Activated CD8-positive, alpha-beta T cell treated with anti-CD3 and anti-CD28 coated beads for 36 hours (primary cell): ENCODE measurements at regions of chrX and their contacts with region 1.

Region 1: DNA sequence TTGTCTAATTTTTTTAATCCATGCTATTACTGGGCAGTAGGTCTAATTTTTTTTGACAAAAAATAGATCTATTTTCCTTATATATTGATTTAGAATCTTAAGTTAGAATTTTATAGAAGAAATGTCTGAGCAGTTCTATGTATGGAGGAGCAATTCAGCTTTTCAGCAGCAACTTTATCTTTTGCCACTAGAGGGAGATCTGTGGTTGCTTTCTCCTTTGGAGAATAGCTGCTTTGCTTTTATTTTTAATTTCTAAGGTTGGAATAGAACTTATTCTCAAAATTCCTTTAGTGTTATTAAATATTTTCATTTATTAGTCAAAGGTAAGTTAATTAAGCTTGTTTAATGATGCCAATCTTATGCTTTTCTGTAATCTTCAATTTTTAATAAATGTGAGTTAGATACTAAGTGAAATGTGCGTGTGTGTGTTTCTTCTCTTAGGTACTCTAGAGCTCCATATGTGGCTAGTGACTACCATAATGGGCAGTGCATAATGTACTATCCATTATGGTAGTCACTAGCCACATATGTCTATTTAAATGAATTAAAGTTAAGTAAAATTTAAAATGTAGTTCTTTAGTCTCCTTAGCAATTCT is 29.3 kb downstream of the FAM199X start:
- DNase-seq: peak; percentile 2
- ATAC-seq: no peak
- H3K4me3 Mint-ChIP-seq: no peak overlapping the region
- H3K27ac Mint-ChIP-seq: no peak overlapping the region
- H3K4me1 Mint-ChIP-seq: peaks cover 10% of the 10 kb centered on the region
- H3K27me3 Mint-ChIP-seq: no peaks in the 10 kb centered on the region
- CTCF ChIP-seq: peak; percentile 37

Region 2: DNA sequence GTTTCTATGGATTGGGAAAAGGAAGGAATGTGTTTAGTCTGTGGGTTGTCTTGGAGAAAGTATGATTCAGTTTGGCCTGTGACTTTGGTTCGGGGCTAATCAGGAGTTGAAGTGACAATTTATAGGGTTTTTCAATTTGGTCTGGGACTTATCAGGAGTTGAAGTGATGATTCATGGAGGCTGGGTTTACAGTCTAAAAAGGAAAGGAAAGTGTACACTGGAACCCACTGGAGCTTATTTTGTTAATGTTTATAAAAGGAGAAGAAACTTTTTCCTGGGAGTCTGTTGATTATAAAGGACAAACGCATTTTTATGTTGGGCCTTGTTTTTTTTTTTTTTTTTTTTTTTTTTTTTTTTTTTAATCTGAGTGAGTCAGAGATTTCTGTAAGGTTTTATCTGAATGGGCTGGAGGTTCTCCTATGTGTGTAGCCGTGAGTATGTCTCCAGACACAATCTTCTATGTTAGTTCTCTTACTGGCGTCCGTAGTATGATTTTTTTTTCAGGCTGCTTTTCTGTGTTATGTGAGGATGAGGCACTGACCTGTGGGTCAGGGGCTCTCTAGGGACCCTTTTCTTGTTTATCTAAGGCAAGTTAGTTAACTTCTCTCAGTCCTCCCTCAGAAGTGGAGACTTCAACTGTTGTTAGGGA is 330.6 kb before region 1 on chrX:
- CTCF ChIA-PET with region 1: no interaction called
- POLR2A ChIA-PET with region 1: no interaction called
- intact Hi-C with region 1: no loop called
- DNase-seq: no peak
- ATAC-seq: no peak
- H3K4me3 Mint-ChIP-seq: no peak overlapping the region
- H3K27ac Mint-ChIP-seq: no peak overlapping the region
- H3K4me1 Mint-ChIP-seq: no peaks in the 10 kb centered on the region
- H3K27me3 Mint-ChIP-seq: no peaks in the 10 kb centered on the region
- CTCF ChIP-seq: no peak

Region 3: DNA sequence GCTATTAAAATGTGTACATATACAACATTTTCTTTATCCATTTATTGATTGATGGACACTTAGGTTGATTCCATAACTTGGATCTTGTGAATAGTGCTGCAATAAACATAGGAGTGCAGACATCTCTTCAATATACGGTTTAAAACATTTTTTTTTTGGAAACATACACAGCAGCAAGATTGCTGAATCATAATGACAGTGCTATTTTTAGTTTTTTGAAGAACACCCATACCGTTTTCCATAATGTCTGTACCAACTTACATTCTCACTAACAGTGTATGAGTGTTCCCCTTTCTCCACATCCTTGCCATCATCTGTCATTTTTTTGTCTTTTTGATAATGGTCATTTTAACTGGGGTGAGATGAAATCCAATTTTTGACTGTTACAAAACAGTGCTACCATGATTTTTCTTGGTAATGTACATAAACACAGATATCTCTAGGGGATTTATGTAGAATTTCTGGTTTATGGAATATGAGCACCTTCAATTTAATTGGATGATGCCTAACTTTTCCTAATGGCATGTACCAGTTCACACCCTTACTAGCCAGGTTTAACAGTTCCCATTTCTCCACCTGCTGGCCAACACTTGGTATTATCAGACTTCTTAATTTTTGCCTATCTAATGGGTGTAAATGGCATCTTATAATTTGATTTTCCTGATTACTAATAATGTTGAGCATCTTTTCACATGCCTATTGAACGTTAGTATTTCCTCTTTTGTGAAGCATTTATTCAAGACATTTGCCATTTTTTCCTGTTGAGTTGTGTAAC is 254.2 kb before region 1 on chrX:
- CTCF ChIA-PET with region 1: no interaction called
- POLR2A ChIA-PET with region 1: no interaction called
- intact Hi-C with region 1: no loop called
- DNase-seq: no peak
- ATAC-seq: no peak
- H3K4me3 Mint-ChIP-seq: no peak overlapping the region
- H3K27ac Mint-ChIP-seq: no peak overlapping the region
- H3K4me1 Mint-ChIP-seq: peaks cover 45% of the 10 kb centered on the region
- H3K27me3 Mint-ChIP-seq: no peaks in the 10 kb centered on the region
- CTCF ChIP-seq: peak; percentile 51

Region 4: DNA sequence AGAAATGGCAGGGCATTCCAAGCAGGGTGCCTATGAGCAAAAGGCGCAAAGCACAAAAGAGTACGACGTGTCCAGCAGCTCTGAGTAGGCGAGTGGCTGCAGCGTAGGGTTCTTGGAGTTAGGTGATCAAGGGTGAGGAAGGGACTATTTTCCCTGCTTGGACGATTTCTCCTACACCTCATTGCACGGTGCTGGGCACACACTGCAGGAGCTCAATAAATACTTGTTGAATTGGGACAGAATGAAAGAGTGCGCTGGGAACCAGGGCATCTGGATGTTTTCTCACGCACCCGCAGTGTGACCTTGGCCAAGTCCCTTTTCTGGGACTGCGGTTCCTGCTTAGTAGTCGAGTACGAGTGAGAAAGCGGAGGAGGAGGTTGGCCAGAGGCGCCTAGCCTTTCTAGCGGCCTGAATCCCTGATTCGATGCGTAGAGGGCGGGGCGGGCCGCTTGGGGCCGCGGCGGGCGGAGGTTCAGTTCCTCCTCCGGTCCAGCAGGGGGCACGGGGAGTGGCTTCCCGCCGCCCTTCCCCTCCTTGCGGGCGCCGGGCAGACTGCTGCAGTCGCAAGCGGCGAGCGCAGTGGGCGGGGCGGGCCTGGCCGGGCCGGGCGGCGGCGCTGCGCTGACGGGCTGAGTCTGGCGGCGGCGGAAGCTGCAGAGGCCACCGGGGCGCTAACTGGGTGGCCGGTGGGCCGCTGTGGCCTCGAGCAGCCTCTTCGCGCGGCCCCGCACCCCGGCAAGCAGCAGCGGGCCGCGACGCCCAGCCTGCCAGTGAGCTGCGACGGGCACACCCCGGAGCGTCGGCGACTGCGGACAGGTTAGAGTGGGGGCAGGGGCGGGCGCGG is 29.5 kb before region 1 on chrX and contains the start of gene FAM199X:
- CTCF ChIA-PET with region 1: interaction called, 14 read pairs
- POLR2A ChIA-PET with region 1: no interaction called
- intact Hi-C with region 1: no loop called
- DNase-seq: peak; percentile 86
- ATAC-seq: peak; percentile 99
- H3K4me3 Mint-ChIP-seq: peak within 1 kb of the TSS; percentile 74
- H3K27ac Mint-ChIP-seq: peak within 1 kb of the TSS; percentile 79
- H3K4me1 Mint-ChIP-seq: peaks cover 35% of the 10 kb centered on the region
- H3K27me3 Mint-ChIP-seq: no peaks in the 10 kb centered on the region
- CTCF ChIP-seq: peak; percentile 50
- total RNA-seq, gene FAM199X: 6.9 to 8.0 TPM

Region 5: GRCh38 chrX:104270920-104271512 is 75.4 kb after region 1 on chrX:
- CTCF ChIA-PET with region 1: interaction called, 11 read pairs
- POLR2A ChIA-PET with region 1: no interaction called
- intact Hi-C with region 1: loop called (anchors 5 kb)
- DNase-seq: peak; percentile 59
- ATAC-seq: peak; percentile 56
- H3K4me3 Mint-ChIP-seq: peak overlapping the region; percentile 53
- H3K27ac Mint-ChIP-seq: no peak overlapping the region
- H3K4me1 Mint-ChIP-seq: no peaks in the 10 kb centered on the region
- H3K27me3 Mint-ChIP-seq: peaks cover 19% of the 10 kb centered on the region
- CTCF ChIP-seq: peak; percentile 59